ENCODE measurements at regions of chr5 and their contacts with region 1.

Region 1: GRCh38 chr5:66987949-66988838 is 208.4 kb downstream of the CD180 start:
- DNase-seq: no peak
- H3K4me3 ChIP-seq: no peak overlapping the region
- H3K27ac ChIP-seq: no peak overlapping the region
- H3K27me3 ChIP-seq: no peaks in the 10 kb centered on the region
- CTCF ChIP-seq: peak; percentile 84

Region 2: DNA sequence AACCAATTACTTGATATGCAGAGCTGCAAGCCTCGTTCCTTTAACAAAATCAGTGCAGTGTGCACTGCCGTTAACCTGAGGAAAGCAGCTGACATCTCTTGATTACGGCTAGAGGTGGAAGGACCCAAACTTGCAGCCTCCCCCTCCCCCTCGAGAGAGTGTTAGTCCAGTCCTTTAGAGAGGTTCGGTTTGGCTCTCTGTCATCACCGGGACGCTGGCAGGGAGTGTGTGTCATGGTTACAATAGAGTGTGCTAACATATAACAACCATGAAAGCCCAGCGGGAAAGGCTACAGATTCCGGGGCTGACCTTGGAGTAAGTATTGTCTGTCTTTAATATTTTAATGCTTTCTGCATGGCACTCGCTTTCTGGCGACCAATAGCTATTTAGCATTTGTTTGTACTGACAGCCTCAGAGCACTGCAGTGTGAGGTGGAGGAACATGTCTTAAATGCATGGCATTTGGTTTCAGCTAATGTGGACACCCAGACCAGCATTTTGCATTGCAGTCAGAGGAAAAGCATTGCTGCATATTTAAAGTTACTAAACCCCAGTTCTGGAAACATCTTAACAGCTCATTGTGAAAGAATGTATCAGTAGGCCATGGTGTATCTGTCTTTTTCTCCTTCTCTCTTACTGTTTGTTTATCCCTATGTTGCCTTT is 29.1 kb before region 1 on chr5:
- CTCF ChIA-PET with region 1: interaction called, 27 read pairs
- POLR2A ChIA-PET with region 1: no interaction called
- DNase-seq: peak; percentile 43
- H3K4me3 ChIP-seq: peak overlapping the region; percentile 70
- H3K27ac ChIP-seq: peak overlapping the region; percentile 85
- H3K27me3 ChIP-seq: no peaks in the 10 kb centered on the region
- CTCF ChIP-seq: no peak

Region 3: GRCh38 chr5:66967102-66967501 is 21.1 kb before region 1 on chr5:
- CTCF ChIA-PET with region 1: interaction called, 12 read pairs
- POLR2A ChIA-PET with region 1: no interaction called
- DNase-seq: peak; percentile 61
- H3K4me3 ChIP-seq: no peak overlapping the region
- H3K27ac ChIP-seq: peak overlapping the region; percentile 49
- H3K27me3 ChIP-seq: no peaks in the 10 kb centered on the region
- CTCF ChIP-seq: no peak

Region 4: GRCh38 chr5:67003935-67004729 is 15.9 kb after region 1 on chr5:
- CTCF ChIA-PET with region 1: interaction called, 22 read pairs
- POLR2A ChIA-PET with region 1: no interaction called
- DNase-seq: peak; percentile 59
- H3K4me3 ChIP-seq: peak overlapping the region; percentile 63
- H3K27ac ChIP-seq: peak overlapping the region; percentile 54
- H3K27me3 ChIP-seq: no peaks in the 10 kb centered on the region
- CTCF ChIP-seq: no peak

Region 5: GRCh38 chr5:67021521-67021920 is 33.3 kb after region 1 on chr5:
- CTCF ChIA-PET with region 1: interaction called, 14 read pairs
- POLR2A ChIA-PET with region 1: no interaction called
- DNase-seq: no peak
- H3K4me3 ChIP-seq: no peak overlapping the region
- H3K27ac ChIP-seq: no peak overlapping the region
- H3K27me3 ChIP-seq: no peaks in the 10 kb centered on the region
- CTCF ChIP-seq: no peak